K562 (cell line): ENCODE measurements at regions of chr12 and their contacts with region 1.

Region 1: GRCh38 chr12:38175538-38175937 is 141.0 kb upstream of the ALG10B start:
- DNase-seq: no peak
- ATAC-seq: no peak
- H3K4me3 ChIP-seq: no peak overlapping the region
- H3K27ac ChIP-seq: no peak overlapping the region
- H3K4me1 ChIP-seq: no peaks in the 10 kb centered on the region
- H3K27me3 ChIP-seq: no peaks in the 10 kb centered on the region
- CTCF ChIP-seq: no peak
- EP300 ChIP-seq: no peak
- POLR2A ChIP-seq: no peak
- RAD21 ChIP-seq: no peak

Region 2: GRCh38 chr12:38124247-38125012 is 51.1 kb before region 1 on chr12:
- CTCF ChIA-PET with region 1: no interaction called
- POLR2A ChIA-PET with region 1: no interaction called
- in situ Hi-C with region 1: no loop called
- intact Hi-C with region 1: loop called (anchors 10 kb)
- DNase-seq: no peak
- ATAC-seq: no peak
- H3K4me3 ChIP-seq: no peak overlapping the region
- H3K27ac ChIP-seq: no peak overlapping the region
- H3K4me1 ChIP-seq: no peaks in the 10 kb centered on the region
- H3K27me3 ChIP-seq: no peaks in the 10 kb centered on the region
- CTCF ChIP-seq: no peak
- EP300 ChIP-seq: no peak
- POLR2A ChIP-seq: no peak
- RAD21 ChIP-seq: no peak